ENCODE measurements at regions of chr18 and their contacts with region 1.

Region 1: GRCh38 chr18:23689031-23689615 is at the start of gene LAMA3:
- DNase-seq: peak; percentile 61
- H3K4me3 ChIP-seq: peak within 1 kb of the TSS; percentile 26 to 60 (median 48)
- H3K27ac ChIP-seq: peak within 1 kb of the TSS in 1 of 4 donors; percentile 22
- H3K4me1 ChIP-seq: peaks cover 4 to 28% (median 23%) of the 10 kb centered on the region in 4 donors
- H3K27me3 ChIP-seq: peaks cover 45% of the 10 kb centered on the region
- CTCF ChIP-seq: peak in 1 of 5 experiments; percentile 21
- EP300 ChIP-seq: no peak
- POLR2A ChIP-seq: no peak
- total RNA-seq, gene LAMA3: 17.5 to 71.8 (median 47.4) TPM

Region 2: GRCh38 chr18:23721701-23722480 is 32.8 kb after region 1 on chr18:
- in situ Hi-C with region 1: no loop called
- intact Hi-C with region 1: no loop called
- DNase-seq: no peak
- H3K4me3 ChIP-seq: no peak overlapping the region
- H3K27ac ChIP-seq: no peak overlapping the region
- H3K4me1 ChIP-seq: peaks cover 0 to 11% (median 4%) of the 10 kb centered on the region in 4 donors
- H3K27me3 ChIP-seq: no peaks in the 10 kb centered on the region
- CTCF ChIP-seq: no peak
- EP300 ChIP-seq: no peak
- POLR2A ChIP-seq: no peak

Region 3: GRCh38 chr18:23784832-23785245 is 95.7 kb after region 1 on chr18:
- in situ Hi-C with region 1: loop called in 1 of 4 experiments (anchors 25 kb)
- intact Hi-C with region 1: no loop called
- DNase-seq: peak; percentile 16
- H3K4me3 ChIP-seq: no peak overlapping the region
- H3K27ac ChIP-seq: no peak overlapping the region
- H3K4me1 ChIP-seq: peaks cover 0 to 12% (median 0%) of the 10 kb centered on the region in 4 donors
- H3K27me3 ChIP-seq: no peaks in the 10 kb centered on the region
- CTCF ChIP-seq: no peak
- EP300 ChIP-seq: no peak
- POLR2A ChIP-seq: no peak

Measured in transverse colon (tissue), 4 donors.